Ascending aorta (tissue), 2 donors: ENCODE measurements at regions of chr1 and their contacts with region 1.

Region 1: DNA sequence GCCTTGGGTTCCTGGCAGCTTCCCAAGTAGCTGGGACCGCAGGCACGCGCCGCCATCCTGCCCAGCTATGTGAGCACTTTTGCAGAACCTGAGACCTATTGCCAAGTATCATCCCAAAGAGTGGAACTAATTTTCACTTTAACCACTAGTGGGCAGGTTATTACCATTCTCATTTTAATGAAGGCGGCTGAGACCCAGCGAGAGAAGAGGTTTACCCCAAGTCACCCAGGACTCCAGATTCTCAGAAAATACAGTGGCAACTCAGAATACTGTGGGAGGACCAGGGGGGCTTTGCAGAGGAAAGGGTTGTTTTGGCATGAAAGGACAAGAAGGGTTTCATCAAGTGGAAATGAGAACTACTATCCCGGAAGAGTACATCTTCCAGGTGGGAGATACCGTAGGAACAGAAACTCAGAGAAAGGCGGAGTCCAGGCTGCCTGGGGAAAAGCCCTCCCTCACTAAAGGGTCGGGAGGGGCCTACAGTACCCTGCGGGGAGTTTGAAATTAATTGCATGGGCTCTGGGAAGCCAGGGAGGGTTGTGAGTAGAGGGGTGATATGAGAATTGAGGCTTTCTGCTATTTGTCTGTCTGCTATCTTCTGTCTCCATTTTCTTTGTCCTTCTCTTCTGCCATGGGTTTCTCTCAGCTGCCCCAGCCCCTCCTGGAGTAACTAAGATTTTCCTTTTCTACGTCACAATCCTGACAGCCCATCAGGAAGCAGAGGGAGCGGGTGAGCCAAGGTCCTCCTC is 7.2 kb upstream of the SEMA4A start:
- DNase-seq: peak in 1 of 2 donors; percentile 87
- H3K4me3 ChIP-seq: peak overlapping the region in 1 of 2 donors; percentile 16
- H3K27ac ChIP-seq: no peak overlapping the region
- H3K4me1 ChIP-seq: peaks cover 17 to 20% of the 10 kb centered on the region in 2 donors
- H3K27me3 ChIP-seq: no peaks in the 10 kb centered on the region
- CTCF ChIP-seq: peak; percentile 53 to 67 (median 64)

Region 2: DNA sequence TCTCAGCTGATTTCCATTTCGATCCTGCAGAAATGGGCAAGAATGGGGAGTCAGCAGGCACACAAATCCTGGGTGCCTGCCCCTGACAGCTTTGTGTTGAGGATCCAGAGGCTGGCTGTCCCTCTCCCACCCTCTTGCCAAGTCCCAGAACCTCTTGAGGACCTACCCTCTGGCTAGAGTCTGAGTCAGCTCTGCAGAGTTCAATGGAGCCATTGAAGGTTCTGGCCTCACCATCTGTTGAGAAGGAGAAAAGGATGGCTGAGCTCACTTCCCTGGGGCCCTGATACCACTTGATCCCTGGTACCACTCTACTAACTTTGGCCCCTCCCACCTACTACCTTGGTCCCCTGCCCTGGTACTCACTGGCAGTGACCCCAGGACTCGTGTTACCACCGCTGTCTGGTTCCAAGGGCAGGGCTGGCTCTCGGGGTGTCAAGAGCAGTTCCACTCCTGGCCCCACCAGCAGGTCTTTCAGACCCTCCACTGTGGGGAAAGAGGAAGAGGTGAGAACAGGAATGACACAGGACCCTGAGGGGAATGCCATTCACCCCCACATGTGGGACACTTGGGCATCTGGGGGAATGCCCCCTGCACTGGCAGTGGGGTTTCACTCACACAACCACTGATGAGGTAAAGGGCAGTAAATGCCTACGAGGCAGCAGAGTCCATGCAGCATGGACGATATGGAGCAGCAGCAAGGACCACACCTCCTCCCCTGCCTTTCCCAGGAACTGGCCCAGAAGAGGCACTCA is 194.3 kb before region 1 on chr1:
- intact Hi-C with region 1: loop called (anchors 10 kb)
- DNase-seq: no peak
- H3K4me3 ChIP-seq: no peak overlapping the region
- H3K27ac ChIP-seq: peak overlapping the region; percentile 18 to 59
- H3K4me1 ChIP-seq: no peaks in the 10 kb centered on the region
- H3K27me3 ChIP-seq: no peaks in the 10 kb centered on the region
- CTCF ChIP-seq: no peak

Region 3: DNA sequence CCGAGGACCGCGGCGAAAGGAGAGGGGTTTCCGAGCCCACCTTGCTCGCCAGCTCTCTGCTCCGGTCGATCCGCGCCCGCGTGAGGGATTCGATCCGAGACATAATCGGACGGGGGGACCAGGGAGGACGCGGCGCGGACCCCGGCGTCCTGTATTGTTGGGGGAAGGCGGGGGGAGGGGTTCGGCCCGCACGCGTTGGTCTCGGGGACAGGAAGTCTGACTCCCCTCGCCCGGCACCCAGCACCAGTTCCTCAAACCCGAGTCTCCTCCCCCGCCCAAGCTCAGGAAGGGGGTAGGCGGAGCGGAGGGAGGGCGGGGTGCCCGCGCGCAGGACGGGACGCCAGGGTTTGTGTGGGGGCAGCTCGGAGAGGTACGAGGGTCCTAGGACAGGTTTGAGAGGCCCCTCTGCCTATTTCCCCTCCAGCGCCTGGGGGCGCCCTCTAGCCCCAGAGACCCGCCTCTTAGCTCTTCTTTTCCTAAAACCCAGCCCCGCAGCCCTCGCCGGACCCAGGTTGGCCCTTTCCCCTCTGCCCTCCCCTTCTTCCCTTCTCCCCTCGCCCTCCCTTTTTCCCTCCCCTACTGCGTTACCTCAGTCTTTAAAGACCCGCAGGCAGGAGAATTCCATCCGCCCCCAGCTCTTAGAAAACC is 167.7 kb before region 1 on chr1 and contains the start of gene ARHGEF2:
- intact Hi-C with region 1: no loop called
- DNase-seq: peak; percentile 64 to 91
- H3K4me3 ChIP-seq: peak within 1 kb of the TSS; percentile 72 to 89
- H3K27ac ChIP-seq: peak within 1 kb of the TSS; percentile 94 to 98
- H3K4me1 ChIP-seq: peaks cover 38 to 55% of the 10 kb centered on the region in 2 donors
- H3K27me3 ChIP-seq: no peaks in the 10 kb centered on the region
- CTCF ChIP-seq: peak in 1 of 3 experiments; percentile 25
- total RNA-seq, gene ARHGEF2: 169 TPM

Region 4: GRCh38 chr1:156129706-156130581 is 16.2 kb before region 1 on chr1:
- intact Hi-C with region 1: no loop called
- DNase-seq: peak; percentile 66 to 97
- H3K4me3 ChIP-seq: peak overlapping the region; percentile 46 to 93
- H3K27ac ChIP-seq: peak overlapping the region; percentile 97
- H3K4me1 ChIP-seq: peaks cover 32 to 52% of the 10 kb centered on the region in 2 donors
- H3K27me3 ChIP-seq: no peaks in the 10 kb centered on the region
- CTCF ChIP-seq: peak; percentile 96 to 98 (median 96)

Region 5: DNA sequence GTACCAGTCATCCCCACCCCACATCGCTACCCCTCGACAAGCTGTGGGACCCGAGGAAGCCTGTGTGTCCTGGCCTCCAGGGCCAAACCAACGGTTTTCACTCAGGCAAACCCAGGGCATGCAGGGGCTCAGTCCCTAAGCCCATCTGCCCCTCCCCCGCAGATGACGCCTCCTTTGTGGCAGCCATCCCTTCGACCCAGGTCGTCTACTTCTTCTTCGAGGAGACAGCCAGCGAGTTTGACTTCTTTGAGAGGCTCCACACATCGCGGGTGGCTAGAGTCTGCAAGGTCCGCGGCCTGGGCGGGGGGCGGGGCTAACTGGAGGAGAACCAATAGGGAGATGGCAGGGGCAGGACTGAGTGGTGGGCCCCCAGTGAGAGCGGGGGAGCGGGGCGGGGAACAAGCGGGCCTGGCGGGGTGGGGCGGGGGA is 14.6 kb after region 1 on chr1:
- intact Hi-C with region 1: loop called (anchors 2 kb)
- DNase-seq: peak; percentile 71 to 94
- H3K4me3 ChIP-seq: peak overlapping the region; percentile 57 to 77
- H3K27ac ChIP-seq: peak overlapping the region; percentile 75 to 86
- H3K4me1 ChIP-seq: peaks cover 0 to 7% of the 10 kb centered on the region in 2 donors
- H3K27me3 ChIP-seq: no peaks in the 10 kb centered on the region
- CTCF ChIP-seq: no peak

Region 6: GRCh38 chr1:156193488-156194299 is 47.5 kb after region 1 on chr1 and contains the start of gene SLC25A44:
- intact Hi-C with region 1: loop called (anchors 5 kb)
- DNase-seq: peak; percentile 86 to 99
- H3K4me3 ChIP-seq: peak within 1 kb of the TSS; percentile 70 to 97
- H3K27ac ChIP-seq: peak within 1 kb of the TSS; percentile 82 to 87
- H3K4me1 ChIP-seq: peaks cover 7 to 9% of the 10 kb centered on the region in 2 donors
- H3K27me3 ChIP-seq: no peaks in the 10 kb centered on the region
- CTCF ChIP-seq: peak; percentile 28 to 44 (median 44)
- total RNA-seq, gene SLC25A44: 13.5 TPM

Region 7: GRCh38 chr1:156212833-156213643 is 66.8 kb after region 1 on chr1 and contains the start of gene PMF1:
- intact Hi-C with region 1: loop called (anchors 2 kb)
- DNase-seq: peak; percentile 93 to 99
- H3K4me3 ChIP-seq: peak within 1 kb of the TSS; percentile 74 to 82
- H3K27ac ChIP-seq: peak within 1 kb of the TSS; percentile 89 to 96
- H3K4me1 ChIP-seq: peaks cover 5 to 24% of the 10 kb centered on the region in 2 donors
- H3K27me3 ChIP-seq: no peaks in the 10 kb centered on the region
- CTCF ChIP-seq: no peak
- total RNA-seq, gene PMF1: 61.4 TPM

Region 8: GRCh38 chr1:156225677-156226014 is 79.5 kb after region 1 on chr1:
- intact Hi-C with region 1: loop called (anchors 2 kb)
- DNase-seq: no peak
- H3K4me3 ChIP-seq: no peak overlapping the region
- H3K27ac ChIP-seq: no peak overlapping the region
- H3K4me1 ChIP-seq: no peaks in the 10 kb centered on the region
- H3K27me3 ChIP-seq: no peaks in the 10 kb centered on the region
- CTCF ChIP-seq: no peak